Caco-2 (cell line): ENCODE measurements at regions of chr14 and their contacts with region 1.

Region 1: DNA sequence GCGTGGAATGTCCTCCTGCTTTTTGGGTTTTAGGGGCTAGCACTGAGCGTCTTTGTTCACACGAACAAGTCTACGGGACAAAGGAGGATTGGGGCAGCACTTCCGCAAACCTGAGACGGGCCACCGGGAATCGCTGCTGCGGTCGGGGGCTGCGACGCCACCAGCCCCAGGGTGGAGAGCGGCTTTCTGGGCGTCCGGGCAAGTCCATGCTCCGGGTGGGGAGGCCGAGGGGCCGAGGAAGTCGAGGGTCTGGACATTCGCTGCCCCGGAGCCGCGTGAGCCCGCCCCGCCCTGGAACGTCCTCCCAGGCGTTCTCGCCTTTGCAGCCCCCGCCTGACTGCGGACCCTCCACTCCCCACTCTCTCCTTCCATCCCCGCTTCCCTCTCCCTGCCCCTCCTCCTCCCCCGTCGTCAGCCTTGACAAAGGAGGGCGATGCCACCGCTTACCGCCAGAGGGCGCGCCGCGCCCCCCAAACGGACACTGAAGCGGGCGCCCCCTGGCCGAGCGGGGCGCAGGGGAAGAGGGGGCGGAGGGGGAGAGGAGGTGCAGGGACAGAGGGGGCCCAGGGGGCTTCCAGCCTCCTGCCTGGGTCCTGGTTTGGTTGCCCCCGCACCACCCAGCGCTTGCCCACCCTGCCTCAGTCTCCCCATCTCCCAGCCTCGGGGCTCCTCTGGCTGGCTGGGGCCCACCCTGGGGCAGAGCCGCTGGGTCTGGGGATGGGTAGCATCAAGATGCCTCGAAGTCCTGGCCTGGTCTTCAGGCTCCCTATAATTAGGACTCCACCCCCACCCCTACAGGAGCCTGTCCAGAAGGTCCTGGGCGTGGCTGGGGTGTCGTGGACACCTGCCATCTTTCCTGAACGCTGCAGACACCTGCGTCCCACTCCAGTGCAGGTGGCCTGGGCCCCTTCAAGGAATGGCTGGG is 39.1 kb upstream of the INF2 start:
- DNase-seq: peak; percentile 59 to 80
- H3K4me3 ChIP-seq: peak overlapping the region; percentile 44
- H3K4me3 Mint-ChIP-seq: peak overlapping the region; percentile 67
- H3K27ac Mint-ChIP-seq: no peak overlapping the region
- H3K4me1 ChIP-seq: peaks cover 4% of the 10 kb centered on the region; the same call in 1 of the 2 replicates
- H3K4me1 Mint-ChIP-seq: no peaks in the 10 kb centered on the region
- H3K27me3 ChIP-seq: no peaks in the 10 kb centered on the region
- H3K27me3 Mint-ChIP-seq: no peaks in the 10 kb centered on the region
- CTCF ChIP-seq: peak; percentile 99

Region 2: GRCh38 chr14:104283197-104284106 is 366.9 kb before region 1 on chr14:
- CTCF ChIA-PET with region 1: no interaction called
- POLR2A ChIA-PET with region 1: no interaction called
- intact Hi-C with region 1: no loop called
- DNase-seq: peak in 1 of 2 experiments; percentile 25
- H3K4me3 ChIP-seq: no peak overlapping the region
- H3K4me3 Mint-ChIP-seq: no peak overlapping the region
- H3K27ac Mint-ChIP-seq: no peak overlapping the region
- H3K4me1 ChIP-seq: no peaks in the 10 kb centered on the region
- H3K4me1 Mint-ChIP-seq: no peaks in the 10 kb centered on the region
- H3K27me3 ChIP-seq: no peaks in the 10 kb centered on the region
- H3K27me3 Mint-ChIP-seq: peaks cover 2% of the 10 kb centered on the region
- CTCF ChIP-seq: no peak

Region 3: DNA sequence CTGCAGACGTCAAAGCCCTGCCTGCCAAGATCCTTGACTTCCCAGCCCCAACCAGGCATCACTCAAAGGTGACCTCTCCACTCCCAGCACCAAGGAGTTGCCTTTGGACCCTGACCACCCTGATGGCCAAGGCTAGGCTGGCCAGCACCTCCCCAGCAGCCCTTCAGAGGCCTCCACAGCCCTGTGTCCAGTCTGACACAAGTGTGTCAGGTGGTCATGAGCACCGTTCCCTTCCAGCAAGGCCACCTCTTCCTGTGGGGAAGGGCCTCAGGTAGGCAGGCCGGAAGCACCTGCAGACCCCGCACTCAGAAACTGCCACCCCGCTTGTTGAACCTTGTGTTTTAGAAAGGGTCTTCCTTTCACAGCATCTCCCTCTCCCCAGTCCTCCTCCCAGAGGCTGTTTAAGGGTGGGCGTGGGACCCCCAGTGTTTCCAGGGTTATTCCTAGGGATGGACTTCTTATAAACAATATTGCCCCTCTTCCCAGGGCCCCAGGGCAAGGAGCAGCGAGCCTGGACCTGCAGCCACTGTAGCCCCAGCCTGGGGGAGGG is 25.9 kb after region 1 on chr14:
- CTCF ChIA-PET with region 1: no interaction called
- POLR2A ChIA-PET with region 1: no interaction called
- intact Hi-C with region 1: no loop called
- DNase-seq: no peak
- H3K4me3 ChIP-seq: no peak overlapping the region
- H3K4me3 Mint-ChIP-seq: no peak overlapping the region
- H3K27ac Mint-ChIP-seq: peak overlapping the region; percentile 65
- H3K4me1 ChIP-seq: peaks cover 45% of the 10 kb centered on the region
- H3K4me1 Mint-ChIP-seq: peaks cover 19% of the 10 kb centered on the region
- H3K27me3 ChIP-seq: no peaks in the 10 kb centered on the region
- H3K27me3 Mint-ChIP-seq: no peaks in the 10 kb centered on the region
- CTCF ChIP-seq: no peak

Region 4: GRCh38 chr14:104708606-104709268 is 58.4 kb after region 1 on chr14:
- CTCF ChIA-PET with region 1: interaction called, 4 read pairs
- POLR2A ChIA-PET with region 1: no interaction called
- intact Hi-C with region 1: loop called (anchors 1 kb)
- DNase-seq: peak; percentile 70 to 87
- H3K4me3 ChIP-seq: no peak overlapping the region
- H3K4me3 Mint-ChIP-seq: no peak overlapping the region
- H3K27ac Mint-ChIP-seq: peak overlapping the region; percentile 64
- H3K4me1 ChIP-seq: no peaks in the 10 kb centered on the region
- H3K4me1 Mint-ChIP-seq: no peaks in the 10 kb centered on the region
- H3K27me3 ChIP-seq: no peaks in the 10 kb centered on the region
- H3K27me3 Mint-ChIP-seq: no peaks in the 10 kb centered on the region
- CTCF ChIP-seq: peak; percentile 95 to 96